Activated CD4-positive, alpha-beta memory T cell treated with anti-CD3 and anti-CD28 coated beads for 36 hours (primary cell): ENCODE measurements at regions of chr3 and their contacts with region 1.

Region 1: GRCh38 chr3:13484851-13485590 is 4.9 kb downstream of the HDAC11 start:
- DNase-seq: peak; percentile 40
- H3K4me3 Mint-ChIP-seq: no peak overlapping the region
- H3K27ac Mint-ChIP-seq: peak overlapping the region; percentile 13
- H3K4me1 Mint-ChIP-seq: peaks cover 19% of the 10 kb centered on the region
- H3K27me3 Mint-ChIP-seq: no peaks in the 10 kb centered on the region

Region 2: GRCh38 chr3:13495921-13496723 is 11.1 kb after region 1 on chr3:
- CTCF ChIA-PET with region 1: interaction called, 12 read pairs
- POLR2A ChIA-PET with region 1: interaction called, 3 read pairs
- intact Hi-C with region 1: no loop called
- DNase-seq: peak; percentile 82
- H3K4me3 Mint-ChIP-seq: no peak overlapping the region
- H3K27ac Mint-ChIP-seq: no peak overlapping the region
- H3K4me1 Mint-ChIP-seq: no peaks in the 10 kb centered on the region
- H3K27me3 Mint-ChIP-seq: no peaks in the 10 kb centered on the region